HEK293T (cell line): ENCODE measurements at regions of chr12 and their contacts with region 1.

Region 1: DNA sequence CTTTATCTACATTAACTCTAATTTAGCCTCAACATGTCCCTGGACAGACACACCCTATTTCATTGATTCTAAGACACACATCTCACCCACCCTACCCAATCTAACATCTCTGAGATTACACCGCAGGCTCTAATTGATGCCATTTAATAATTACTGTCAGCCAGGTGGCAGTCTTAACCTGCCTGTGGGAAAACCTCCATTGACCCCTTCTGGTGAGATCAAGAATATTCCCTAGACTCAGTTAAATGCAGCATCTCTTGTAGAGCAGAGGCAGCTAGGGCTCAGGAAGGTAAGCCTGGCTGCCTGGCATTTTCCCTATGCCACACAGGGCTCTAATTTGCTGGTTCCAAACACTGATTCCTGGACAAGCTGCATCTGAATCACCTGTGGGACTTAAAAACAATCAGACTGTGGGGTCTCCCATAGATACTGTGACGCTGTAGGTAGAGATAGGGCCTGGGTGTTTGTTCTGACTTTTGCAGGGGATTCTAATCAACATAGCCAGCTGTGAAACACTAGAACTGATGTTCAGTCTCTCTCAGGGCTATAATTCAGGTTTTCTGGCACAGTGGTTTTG is 14.3 kb downstream of the MCRS1 start:
- DNase-seq: peak; percentile 54

Region 2: DNA sequence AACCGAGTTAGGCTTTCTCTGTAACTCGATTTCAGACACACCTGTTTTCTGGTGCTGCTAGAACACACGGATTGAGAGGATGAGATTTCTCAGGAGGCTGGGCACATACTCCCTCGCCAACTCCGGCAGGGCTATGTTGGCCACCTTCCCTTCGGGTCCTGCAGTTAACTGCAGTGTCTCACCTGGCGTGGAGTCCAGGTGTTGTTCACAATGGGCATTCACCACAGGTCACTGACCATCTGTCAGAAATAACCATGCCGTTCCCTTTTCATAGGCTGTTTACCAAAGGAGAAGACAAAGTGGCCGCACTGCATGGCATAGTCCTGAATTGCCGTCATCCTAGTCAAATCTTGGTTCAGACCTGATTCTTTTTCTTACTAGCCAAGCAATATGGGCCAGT is 20.3 kb before region 1 on chr12:
- CTCF ChIA-PET with region 1: no interaction called
- POLR2A ChIA-PET with region 1: no interaction called
- DNase-seq: no peak

Region 3: GRCh38 chr12:49567611-49568441 is 14.2 kb after region 1 on chr12 and contains the start of gene MCRS1:
- CTCF ChIA-PET with region 1: interaction called, 3 read pairs
- POLR2A ChIA-PET with region 1: interaction called, 12 read pairs
- DNase-seq: peak; percentile 94

Region 4: GRCh38 chr12:49580572-49581535 is 27.3 kb after region 1 on chr12:
- CTCF ChIA-PET with region 1: interaction called, 10 read pairs
- POLR2A ChIA-PET with region 1: interaction called, 3 read pairs
- DNase-seq: peak; percentile 84